ENCODE measurements at regions of chr2 and their contacts with region 1.

Region 1: GRCh38 chr2:109510136-109511028 is 103.4 kb downstream of the SEPTIN10 start:
- DNase-seq: peak; percentile 66
- H3K4me3 ChIP-seq: no peak overlapping the region
- H3K27ac ChIP-seq: no peak overlapping the region
- H3K4me1 ChIP-seq: no peaks in the 10 kb centered on the region
- H3K27me3 ChIP-seq: no peaks in the 10 kb centered on the region
- CTCF ChIP-seq: peak; percentile 90 to 96
- POLR2A ChIP-seq: no peak

Region 2: GRCh38 chr2:109128048-109128465 is 382.3 kb before region 1 on chr2:
- CTCF ChIA-PET with region 1: interaction called, 163 read pairs
- POLR2A ChIA-PET with region 1: no interaction called
- dilution Hi-C with region 1: no loop called
- intact Hi-C with region 1: loop called (anchors 1 kb)
- DNase-seq: peak; percentile 89
- H3K4me3 ChIP-seq: peak overlapping the region; percentile 62 to 73 (median 69)
- H3K27ac ChIP-seq: peak overlapping the region; percentile 75
- H3K4me1 ChIP-seq: peaks cover 12% of the 10 kb centered on the region
- H3K27me3 ChIP-seq: no peaks in the 10 kb centered on the region
- CTCF ChIP-seq: peak; percentile 89 to 96
- POLR2A ChIP-seq: no peak

Region 3: DNA sequence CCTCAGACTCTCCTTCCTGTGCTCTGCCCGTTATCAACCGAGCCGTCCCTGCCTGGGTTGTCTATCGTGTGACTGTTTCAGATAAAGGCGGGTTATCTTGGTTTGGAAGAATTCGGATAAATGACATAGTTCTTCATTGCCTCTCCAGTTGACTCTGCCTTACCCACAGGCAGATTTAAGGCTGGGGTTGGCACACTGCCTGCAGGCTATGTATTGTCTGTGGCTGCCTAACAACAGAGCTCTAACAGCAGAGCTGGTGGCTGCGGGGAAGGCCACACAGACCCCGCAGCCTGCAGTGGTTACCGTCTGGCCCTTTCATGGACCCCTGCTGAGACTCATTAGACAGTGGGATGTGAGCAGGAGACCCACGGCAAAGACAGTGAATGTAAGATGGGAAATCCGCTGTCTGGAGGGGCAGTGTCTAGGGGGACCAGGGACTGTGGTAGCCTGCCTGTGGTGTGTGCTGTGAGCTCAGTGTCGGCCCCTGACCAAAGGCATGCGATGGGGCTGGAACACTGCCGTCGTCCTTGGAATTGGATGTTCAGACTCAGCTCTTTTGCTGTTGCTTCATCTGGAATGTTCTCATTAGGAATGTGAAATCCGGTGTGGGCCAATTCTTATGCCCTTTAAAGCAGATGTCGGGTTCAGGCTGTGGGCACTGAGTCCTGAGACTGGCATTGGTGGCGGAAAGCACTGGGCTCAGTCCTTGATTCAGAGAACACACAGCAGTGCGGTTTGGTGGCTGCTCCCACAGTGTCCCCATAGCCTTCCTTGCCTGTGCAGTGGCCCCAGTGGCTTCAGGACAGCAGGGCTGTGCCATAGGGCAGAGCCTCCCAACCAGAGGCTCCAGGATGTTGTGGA is 336.8 kb before region 1 on chr2:
- CTCF ChIA-PET with region 1: interaction called, 15 read pairs
- POLR2A ChIA-PET with region 1: no interaction called
- dilution Hi-C with region 1: no loop called
- intact Hi-C with region 1: no loop called
- DNase-seq: peak; percentile 82
- H3K4me3 ChIP-seq: no peak overlapping the region
- H3K27ac ChIP-seq: peak overlapping the region; percentile 90
- H3K4me1 ChIP-seq: peaks cover 55% of the 10 kb centered on the region
- H3K27me3 ChIP-seq: no peaks in the 10 kb centered on the region
- CTCF ChIP-seq: no peak
- POLR2A ChIP-seq: peak; percentile 48

Region 4: DNA sequence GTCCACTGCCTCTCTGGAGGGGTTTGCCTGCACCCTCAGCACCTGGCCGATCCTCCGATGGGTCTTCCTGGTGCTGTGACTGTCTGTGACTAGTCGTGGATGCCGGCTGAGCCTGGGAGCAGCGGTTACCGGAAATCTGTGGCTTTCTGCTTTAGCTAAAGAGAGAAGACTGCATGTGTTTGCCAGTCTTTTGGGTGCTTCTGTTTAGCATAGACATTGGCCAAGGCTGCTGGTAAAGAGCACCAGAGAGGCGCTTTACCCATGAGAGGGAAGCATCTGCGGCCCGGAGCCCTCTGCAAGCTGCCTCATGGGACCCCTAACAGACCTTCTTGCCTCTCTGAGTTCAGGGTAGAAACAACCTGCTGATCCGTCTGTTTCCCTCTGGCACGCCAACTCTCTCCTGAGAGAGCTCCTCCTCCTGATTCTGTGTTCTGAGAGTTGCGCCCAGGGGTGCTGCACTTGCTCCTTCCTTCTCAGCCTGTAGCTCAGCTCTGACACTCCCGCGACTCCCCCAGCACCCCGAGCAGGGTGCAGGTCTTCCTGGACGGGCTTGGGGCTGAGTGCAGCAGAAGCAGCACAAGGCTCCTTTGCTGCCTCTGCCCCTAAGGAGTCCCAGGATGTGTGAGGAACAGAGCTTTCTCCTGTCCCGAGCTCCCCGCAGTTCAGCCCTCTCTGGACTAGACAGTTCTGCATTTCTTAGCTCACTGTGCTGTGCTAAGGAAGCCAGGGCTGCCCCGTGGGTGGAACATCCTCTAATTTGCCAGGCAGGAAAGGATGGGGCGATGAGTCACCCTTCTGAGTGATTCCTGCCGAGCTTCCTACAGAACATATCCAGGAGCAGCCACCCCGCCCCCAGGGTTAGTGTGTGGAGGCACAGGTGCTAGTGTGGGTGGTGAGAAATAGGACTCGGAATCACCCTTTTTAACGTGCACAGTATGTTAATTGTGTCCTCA is 178.2 kb before region 1 on chr2:
- CTCF ChIA-PET with region 1: interaction called, 23 read pairs
- POLR2A ChIA-PET with region 1: no interaction called
- dilution Hi-C with region 1: no loop called
- intact Hi-C with region 1: no loop called
- DNase-seq: peak; percentile 92
- H3K4me3 ChIP-seq: peak overlapping the region in 1 of 3 experiments; percentile 34
- H3K27ac ChIP-seq: peak overlapping the region; percentile 76
- H3K4me1 ChIP-seq: peaks cover 54% of the 10 kb centered on the region
- H3K27me3 ChIP-seq: no peaks in the 10 kb centered on the region
- CTCF ChIP-seq: no peak
- POLR2A ChIP-seq: peak; percentile 76

Region 5: GRCh38 chr2:109407276-109408034 is 102.9 kb before region 1 on chr2:
- CTCF ChIA-PET with region 1: interaction called, 10 read pairs
- POLR2A ChIA-PET with region 1: no interaction called
- dilution Hi-C with region 1: no loop called
- intact Hi-C with region 1: no loop called
- DNase-seq: no peak
- H3K4me3 ChIP-seq: no peak overlapping the region
- H3K27ac ChIP-seq: no peak overlapping the region
- H3K4me1 ChIP-seq: no peaks in the 10 kb centered on the region
- H3K27me3 ChIP-seq: no peaks in the 10 kb centered on the region
- CTCF ChIP-seq: no peak
- POLR2A ChIP-seq: no peak

Region 6: DNA sequence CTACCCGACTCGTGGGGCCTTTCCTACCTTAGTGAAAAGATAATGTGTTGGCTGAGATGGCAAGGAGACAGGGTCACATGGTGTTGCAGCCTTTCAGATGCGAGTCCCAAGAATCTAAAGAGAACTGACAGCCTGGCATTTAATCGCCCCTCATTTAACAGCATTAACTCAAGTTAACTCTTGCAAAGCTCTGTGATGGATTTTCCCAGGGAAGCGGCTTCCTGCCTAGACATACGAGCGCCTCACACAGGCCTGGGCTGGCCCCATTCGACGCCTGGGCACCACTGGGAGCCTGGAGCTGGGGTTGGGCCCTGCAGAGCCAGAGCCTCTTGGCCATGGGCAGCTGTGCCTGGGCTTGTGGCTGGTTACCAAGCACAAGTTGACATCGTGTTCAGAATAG is 37.4 kb before region 1 on chr2:
- CTCF ChIA-PET with region 1: interaction called, 23 read pairs
- POLR2A ChIA-PET with region 1: no interaction called
- dilution Hi-C with region 1: no loop called
- intact Hi-C with region 1: no loop called
- DNase-seq: no peak
- H3K4me3 ChIP-seq: no peak overlapping the region
- H3K27ac ChIP-seq: no peak overlapping the region
- H3K4me1 ChIP-seq: peaks cover 21% of the 10 kb centered on the region
- H3K27me3 ChIP-seq: no peaks in the 10 kb centered on the region
- CTCF ChIP-seq: no peak
- POLR2A ChIP-seq: no peak

Region 7: GRCh38 chr2:109529532-109530449 is 19.4 kb after region 1 on chr2:
- CTCF ChIA-PET with region 1: interaction called, 10 read pairs
- POLR2A ChIA-PET with region 1: no interaction called
- dilution Hi-C with region 1: no loop called
- intact Hi-C with region 1: no loop called
- DNase-seq: no peak
- H3K4me3 ChIP-seq: no peak overlapping the region
- H3K27ac ChIP-seq: no peak overlapping the region
- H3K4me1 ChIP-seq: no peaks in the 10 kb centered on the region
- H3K27me3 ChIP-seq: peaks cover 5 to 10% of the 10 kb centered on the region in 2 experiments
- CTCF ChIP-seq: no peak
- POLR2A ChIP-seq: no peak

Region 8: DNA sequence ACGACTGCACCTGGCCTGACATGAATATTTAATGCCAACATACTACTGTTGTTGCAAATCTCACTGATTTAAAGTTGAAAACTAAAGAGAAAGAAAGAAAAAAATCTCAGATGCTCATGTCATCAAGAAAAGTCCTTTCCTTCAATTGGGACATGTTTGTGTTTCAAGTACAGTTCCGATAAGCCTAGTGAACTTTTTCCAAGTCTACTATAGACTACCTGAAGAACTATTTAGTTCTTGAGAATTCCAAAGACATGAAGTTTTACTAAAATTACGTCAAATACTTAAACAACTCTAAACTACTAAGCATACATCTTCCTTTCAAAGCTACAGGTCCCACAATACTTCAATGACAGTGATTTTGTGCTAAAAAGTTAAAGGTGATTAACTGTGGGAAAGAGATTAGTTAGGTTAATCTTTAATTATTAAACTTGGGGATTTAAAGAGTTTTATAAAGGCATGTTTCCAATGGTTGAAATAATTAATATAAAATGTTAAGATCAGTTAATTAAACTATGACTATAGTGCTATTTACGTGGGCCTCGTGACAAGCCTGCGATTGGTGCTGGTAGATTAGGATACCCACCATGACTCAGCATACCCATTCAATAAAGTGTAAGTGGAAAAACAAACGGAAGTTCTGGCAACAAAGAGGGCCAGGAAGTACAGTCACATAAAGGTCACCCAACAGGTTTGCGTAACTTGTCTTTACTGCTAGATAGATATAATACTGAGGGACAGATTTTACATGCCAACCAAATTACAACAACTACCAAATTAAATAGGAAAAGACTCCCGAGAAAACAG is 47.9 kb after region 1 on chr2:
- CTCF ChIA-PET with region 1: no interaction called
- POLR2A ChIA-PET with region 1: no interaction called
- dilution Hi-C with region 1: no loop called
- intact Hi-C with region 1: no loop called
- DNase-seq: peak; percentile 96
- H3K4me3 ChIP-seq: no peak overlapping the region
- H3K27ac ChIP-seq: peak overlapping the region; percentile 96
- H3K4me1 ChIP-seq: peaks cover 32% of the 10 kb centered on the region
- H3K27me3 ChIP-seq: no peaks in the 10 kb centered on the region
- CTCF ChIP-seq: no peak
- POLR2A ChIP-seq: peak; percentile 44

Measured in endothelial cell of umbilical vein (primary cell).